ENCODE measurements at regions of chr18 and their contacts with region 1.

Region 1: DNA sequence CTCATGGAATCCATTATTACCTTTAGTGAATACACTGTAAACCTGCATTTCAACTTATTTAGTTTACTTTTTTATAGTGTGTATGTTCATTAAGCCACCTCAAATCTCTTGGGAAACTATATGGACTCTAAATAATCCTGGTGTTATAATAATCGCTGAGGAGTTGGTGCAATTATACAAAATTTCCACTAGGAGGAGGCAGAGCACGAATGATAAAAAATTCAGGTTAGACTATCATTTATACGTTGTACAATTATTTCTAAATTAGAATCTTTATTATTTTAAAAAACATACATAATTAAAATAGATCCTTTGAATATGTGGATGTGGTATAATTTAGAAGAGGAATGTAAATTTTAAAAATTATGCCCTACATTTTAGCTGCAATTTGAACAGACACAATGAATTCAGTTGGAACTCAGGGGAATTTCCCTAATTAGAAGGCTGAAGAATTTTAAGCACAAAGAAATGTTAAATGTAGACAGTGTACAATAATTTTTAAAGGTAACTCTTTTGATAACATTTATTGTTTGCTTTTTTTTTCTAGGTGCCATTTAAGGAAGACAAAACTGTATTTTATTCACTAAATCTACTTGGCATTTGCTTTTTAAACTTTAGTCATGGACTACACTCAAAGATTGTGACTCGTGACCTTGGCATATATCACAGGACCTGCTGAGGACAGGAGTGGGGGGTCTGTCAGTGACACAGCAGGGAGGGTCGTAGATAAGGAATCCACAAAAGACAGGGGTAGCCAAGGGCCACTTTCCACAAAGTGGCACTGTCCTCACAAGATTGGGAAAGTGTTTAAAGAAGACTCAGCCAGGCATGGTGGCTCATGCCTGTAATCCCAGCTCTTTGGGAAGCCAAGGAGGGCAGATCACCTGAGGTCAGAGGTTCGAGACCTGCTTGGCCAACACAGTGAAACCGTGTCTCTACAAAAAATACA is 45.5 kb downstream of the RAB12 start:
- DNase-seq: peak in 4 of 9 donors; percentile 19 to 42 (median 34)
- ATAC-seq: no peak
- H3K4me3 ChIP-seq: no peak overlapping the region
- H3K4me3 Mint-ChIP-seq: no peak overlapping the region
- H3K27ac ChIP-seq: no peak overlapping the region
- H3K27ac Mint-ChIP-seq: no peak overlapping the region
- H3K4me1 ChIP-seq: no peaks in the 10 kb centered on the region
- H3K4me1 Mint-ChIP-seq: peaks cover 0 to 1% (median 0%) of the 10 kb centered on the region in 7 donors
- H3K27me3 ChIP-seq: no peaks in the 10 kb centered on the region
- H3K27me3 Mint-ChIP-seq: peaks cover 13 to 36% (median 27%) of the 10 kb centered on the region in 5 donors

Region 2: DNA sequence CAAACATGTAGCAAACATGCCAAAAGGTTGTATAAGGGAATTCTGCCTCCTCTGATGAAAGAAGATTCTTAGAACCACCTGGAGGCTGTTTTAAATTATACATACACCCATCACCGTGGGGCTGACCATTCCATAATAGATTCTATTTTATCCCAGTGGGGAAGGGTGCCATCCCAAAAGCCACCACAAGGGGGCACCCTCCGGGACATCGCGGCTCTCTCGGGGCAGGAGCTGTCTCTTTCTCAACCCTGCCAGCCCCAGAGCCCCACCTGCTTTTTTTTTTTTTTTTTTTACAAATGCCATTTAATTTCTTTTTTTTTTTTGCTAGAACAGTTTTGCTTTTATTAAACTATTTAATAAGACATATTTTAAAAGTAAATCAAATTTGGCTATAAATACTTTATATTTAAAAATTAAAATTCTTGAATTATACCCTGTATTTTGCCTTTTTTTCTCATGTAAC is 42.0 kb after region 1 on chr18:
- CTCF ChIA-PET with region 1: interaction called, 3 read pairs
- POLR2A ChIA-PET with region 1: no interaction called
- intact Hi-C with region 1: loop called in 1 of 2 experiments (anchors 2 kb)
- DNase-seq: peak; percentile 48 to 81 (median 67)
- ATAC-seq: peak; percentile 97
- H3K4me3 ChIP-seq: no peak overlapping the region
- H3K4me3 Mint-ChIP-seq: no peak overlapping the region
- H3K27ac ChIP-seq: no peak overlapping the region
- H3K27ac Mint-ChIP-seq: no peak overlapping the region
- H3K4me1 ChIP-seq: no peaks in the 10 kb centered on the region
- H3K4me1 Mint-ChIP-seq: no peaks in the 10 kb centered on the region
- H3K27me3 ChIP-seq: no peaks in the 10 kb centered on the region
- H3K27me3 Mint-ChIP-seq: peaks cover 16 to 30% (median 26%) of the 10 kb centered on the region in 5 donors

Region 3: DNA sequence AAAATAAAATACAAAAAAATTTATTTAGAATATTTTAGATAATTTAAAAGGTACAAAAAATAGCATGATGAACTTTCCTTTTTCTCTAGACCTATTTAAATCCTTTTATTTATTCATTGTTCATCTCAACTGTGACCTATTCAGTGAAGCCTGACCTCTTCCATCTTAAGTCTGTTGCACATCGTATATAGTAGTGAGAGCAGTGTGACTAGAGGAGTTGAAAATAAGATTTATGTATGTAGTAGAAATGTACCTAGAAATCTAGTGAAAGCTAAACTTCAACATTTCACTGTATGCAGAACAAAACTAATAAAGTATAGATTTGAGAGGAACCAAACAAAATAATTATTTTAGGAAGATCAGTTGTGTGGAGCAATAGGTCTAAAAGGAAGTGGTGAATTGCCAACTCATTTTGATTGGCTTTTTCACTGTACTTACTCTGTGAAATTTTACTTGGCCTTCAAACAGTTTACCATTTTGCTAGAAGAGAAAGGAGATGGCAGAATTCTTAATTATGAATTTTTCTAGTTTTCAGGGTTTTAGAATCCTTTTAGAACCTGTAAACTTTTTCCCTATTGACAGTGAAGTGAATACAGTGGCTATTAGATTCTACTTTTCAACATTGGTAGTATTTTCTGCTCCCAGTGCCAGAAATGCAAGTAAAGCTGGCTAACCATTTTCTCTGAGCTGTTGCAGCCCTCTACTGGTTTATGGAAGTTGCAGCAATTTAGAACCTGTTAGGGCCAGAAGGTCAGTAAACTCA is 492.8 kb after region 1 on chr18:
- CTCF ChIA-PET with region 1: no interaction called
- POLR2A ChIA-PET with region 1: no interaction called
- intact Hi-C with region 1: loop called in 1 of 2 experiments (anchors 1 kb)
- DNase-seq: peak in 7 of 9 donors; percentile 35 to 66 (median 49)
- ATAC-seq: peak; percentile 81
- H3K4me3 ChIP-seq: no peak overlapping the region
- H3K4me3 Mint-ChIP-seq: peak overlapping the region in 9 of 10 donors; percentile 3 to 79 (median 42)
- H3K27ac ChIP-seq: peak overlapping the region; percentile 30
- H3K27ac Mint-ChIP-seq: peak overlapping the region; percentile 21 to 90 (median 66)
- H3K4me1 ChIP-seq: peaks cover 18 to 59% of the 10 kb centered on the region in 2 donors
- H3K4me1 Mint-ChIP-seq: peaks cover 54 to 93% (median 84%) of the 10 kb centered on the region in 7 donors
- H3K27me3 ChIP-seq: no peaks in the 10 kb centered on the region
- H3K27me3 Mint-ChIP-seq: no peaks in the 10 kb centered on the region

Measured in naive thymus-derived CD4-positive, alpha-beta T cell (primary cell).